ENCODE measurements at regions of chr17 and their contacts with region 1.

Region 1: GRCh38 chr17:4881761-4882555 is 17.4 kb upstream of the C17orf107 start:
- DNase-seq: peak; percentile 84
- H3K4me3 ChIP-seq: no peak overlapping the region
- H3K27ac ChIP-seq: no peak overlapping the region
- H3K4me1 ChIP-seq: peaks cover 18% of the 10 kb centered on the region
- H3K27me3 ChIP-seq: no peaks in the 10 kb centered on the region
- CTCF ChIP-seq: peak; percentile 60 to 74 (median 74)
- POLR2A ChIP-seq: no peak

Region 2: GRCh38 chr17:4565209-4566141 is 316.5 kb before region 1 on chr17:
- intact Hi-C with region 1: no loop called
- DNase-seq: peak; percentile 80
- H3K4me3 ChIP-seq: no peak overlapping the region
- H3K27ac ChIP-seq: no peak overlapping the region
- H3K4me1 ChIP-seq: peaks cover 10% of the 10 kb centered on the region
- H3K27me3 ChIP-seq: no peaks in the 10 kb centered on the region
- CTCF ChIP-seq: peak; percentile 64 to 75 (median 71)
- POLR2A ChIP-seq: no peak

Region 3: DNA sequence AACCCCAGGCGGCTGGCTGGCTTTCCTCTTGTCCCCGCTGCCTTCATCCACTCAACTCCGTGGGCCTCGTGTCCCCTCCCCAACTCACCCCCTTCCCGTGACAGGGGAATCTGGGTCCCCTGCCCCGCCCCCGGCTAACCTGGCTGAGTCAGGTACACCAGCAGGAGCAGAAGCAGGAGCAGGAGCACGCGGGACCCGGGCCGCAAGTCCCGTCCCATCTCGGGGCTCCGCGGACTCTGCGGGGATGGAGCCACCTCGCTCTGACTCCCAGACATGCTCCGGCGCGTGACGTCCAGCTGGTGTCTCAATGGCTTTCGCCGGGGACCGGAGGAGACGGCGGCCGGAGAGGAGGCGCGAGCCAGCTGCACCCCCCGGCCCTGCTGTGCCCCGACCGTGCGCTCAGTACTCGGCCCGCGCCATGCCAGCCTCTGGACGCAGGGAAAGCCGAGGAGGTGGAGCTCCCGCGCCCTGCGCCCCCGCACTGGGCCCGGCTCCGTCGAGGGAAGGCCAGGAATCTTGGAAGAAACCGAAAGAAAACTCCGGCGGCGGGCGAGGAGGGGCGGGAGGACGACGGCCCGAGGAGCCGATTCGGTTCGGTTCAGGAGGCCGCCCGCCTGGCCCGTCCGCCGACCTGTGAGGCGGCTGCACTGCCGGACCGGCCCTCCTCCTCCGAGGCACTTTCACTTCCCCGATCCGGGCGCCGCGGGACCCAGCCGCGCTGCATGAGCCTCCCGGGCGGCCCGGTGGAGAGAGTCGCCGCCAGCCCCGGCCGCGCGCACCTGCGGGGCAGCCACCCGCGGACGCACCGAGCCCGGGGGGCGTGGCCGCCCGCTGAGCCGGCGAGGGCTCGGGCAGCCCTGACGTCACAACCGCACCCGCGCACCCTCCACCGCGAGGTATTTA is 142.6 kb before region 1 on chr17 and contains the starts of genes CXCL16 and ZMYND15:
- intact Hi-C with region 1: loop called (anchors 10 kb)
- DNase-seq: peak; percentile 60
- H3K4me3 ChIP-seq: peak within 1 kb of the TSS; percentile 74 to 81
- H3K27ac ChIP-seq: peak within 1 kb of the TSS; percentile 60 to 61
- H3K4me1 ChIP-seq: no peaks in the 10 kb centered on the region
- H3K27me3 ChIP-seq: no peaks in the 10 kb centered on the region
- CTCF ChIP-seq: no peak
- POLR2A ChIP-seq: no peak
- total RNA-seq, gene CXCL16: 53.0 to 172 TPM
- total RNA-seq, gene ZMYND15: 23.7 to 25.2 TPM

Region 4: DNA sequence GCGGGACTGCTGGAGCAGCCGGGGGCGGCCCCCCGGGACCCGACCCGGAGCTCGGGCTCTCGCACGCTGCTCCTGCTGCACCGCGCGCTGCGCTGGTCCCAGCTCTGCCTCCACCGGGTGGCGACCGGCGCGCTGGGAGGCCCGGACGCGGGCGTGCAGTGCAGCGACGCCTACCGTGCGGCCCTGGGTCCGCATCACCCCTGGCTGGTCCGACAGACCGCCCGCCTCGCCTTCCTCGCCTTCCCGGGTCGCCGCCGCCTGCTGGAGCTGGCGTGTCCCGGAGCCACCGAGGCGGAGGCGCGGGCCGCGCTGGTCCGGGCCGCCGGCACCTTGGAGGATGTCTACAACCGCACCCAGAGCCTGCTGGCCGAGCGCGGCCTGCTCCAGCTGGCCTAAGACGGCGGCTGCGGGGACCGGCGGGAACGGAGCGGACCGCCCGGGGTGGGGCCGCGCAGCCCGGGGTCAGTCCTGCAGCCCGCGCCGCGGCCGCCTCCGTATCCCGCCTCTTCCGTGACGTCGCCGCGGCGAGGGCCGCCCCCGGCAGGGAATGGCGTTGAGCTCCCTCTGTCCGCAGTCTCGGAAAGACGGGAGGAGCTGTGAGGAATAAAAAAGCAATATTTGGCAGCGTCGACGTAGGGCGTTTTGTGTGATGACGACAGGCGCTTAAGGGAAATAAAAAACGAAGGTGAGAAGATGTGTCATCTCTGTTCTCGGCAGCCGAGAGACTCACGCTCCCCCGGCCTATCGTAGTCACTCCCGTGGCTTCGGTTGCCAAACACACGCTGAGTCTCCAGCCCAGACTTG is 91.9 kb before region 1 on chr17:
- intact Hi-C with region 1: loop called (anchors 5 kb)
- DNase-seq: peak; percentile 82
- H3K4me3 ChIP-seq: peak overlapping the region; percentile 59 to 72
- H3K27ac ChIP-seq: peak overlapping the region; percentile 71 to 91
- H3K4me1 ChIP-seq: peaks cover 24% of the 10 kb centered on the region
- H3K27me3 ChIP-seq: no peaks in the 10 kb centered on the region
- CTCF ChIP-seq: peak; percentile 67 to 88 (median 84)
- POLR2A ChIP-seq: no peak

Region 5: GRCh38 chr17:5164436-5164835 is 282.5 kb after region 1 on chr17:
- intact Hi-C with region 1: no loop called
- DNase-seq: no peak
- H3K4me3 ChIP-seq: no peak overlapping the region
- H3K27ac ChIP-seq: no peak overlapping the region
- H3K4me1 ChIP-seq: no peaks in the 10 kb centered on the region
- H3K27me3 ChIP-seq: no peaks in the 10 kb centered on the region
- CTCF ChIP-seq: no peak
- POLR2A ChIP-seq: no peak

Measured in testis (tissue), 5 donors.